Dorsolateral prefrontal cortex (tissue), 120 donors: ENCODE measurements at regions of chrX and their contacts with region 1.

Region 1: DNA sequence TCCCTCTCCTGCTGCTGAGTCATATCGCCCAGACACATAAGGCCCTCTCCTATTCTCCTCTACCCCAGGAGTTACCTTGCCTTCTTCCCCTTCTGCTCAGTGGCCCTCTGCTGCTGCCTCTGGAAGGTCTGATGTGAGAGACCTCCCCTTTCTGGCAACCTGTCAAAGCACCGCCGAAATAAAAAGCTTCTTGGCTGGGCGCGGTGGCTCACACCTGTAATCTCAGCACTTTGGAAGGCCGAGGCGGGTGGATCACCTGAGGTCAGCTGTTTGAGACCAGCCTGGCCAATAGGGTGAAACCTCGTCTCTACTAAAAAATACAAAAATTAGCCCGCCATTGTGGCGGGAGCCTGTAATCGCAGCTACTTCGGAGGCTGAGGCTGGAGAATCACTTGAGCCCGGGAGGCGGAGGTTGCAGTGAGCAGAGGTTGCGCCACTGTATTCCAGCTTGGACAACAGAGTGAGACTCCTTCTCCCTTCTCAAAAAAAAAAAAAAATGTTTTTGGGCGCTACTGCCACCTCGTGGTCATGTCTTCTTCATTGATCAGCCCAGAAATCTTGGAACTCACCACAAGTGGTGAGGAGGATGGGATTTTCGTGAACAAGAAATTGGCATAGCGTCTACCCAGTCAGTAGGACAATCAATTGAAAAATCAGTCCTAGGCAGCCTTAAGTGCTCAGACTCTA is 8.6 kb upstream of the ZXDA start:
- DNase-seq: no peak
- H3K4me3 ChIP-seq: peak overlapping the region in 38 of 59 donors; percentile 6 to 53 (median 31)
- H3K27ac ChIP-seq: no peak overlapping the region
- H3K27me3 ChIP-seq: peaks cover 0 to 73% (median 18%) of the 10 kb centered on the region in 45 donors
- CTCF ChIP-seq: peak in 55 of 56 donors; percentile 40 to 77 (median 60)

Region 2: GRCh38 chrX:57595381-57595811 is 323.5 kb before region 1 on chrX:
- intact Hi-C with region 1: loop called in 1 of 2 experiments (anchors 10 kb)
- DNase-seq: no peak
- H3K4me3 ChIP-seq: peak overlapping the region in 45 of 59 donors; percentile 1 to 52 (median 25)
- H3K27ac ChIP-seq: peak overlapping the region in 5 of 59 donors; percentile 6 to 48 (median 22)
- H3K27me3 ChIP-seq: peaks cover 0 to 36% (median 0%) of the 10 kb centered on the region in 45 donors
- CTCF ChIP-seq: no peak

Region 3: GRCh38 chrX:58025979-58026378 is 107.1 kb after region 1 on chrX:
- intact Hi-C with region 1: no loop called
- DNase-seq: peak in 4 of 10 donors; percentile 6 to 29 (median 17)
- H3K4me3 ChIP-seq: no peak overlapping the region
- H3K27ac ChIP-seq: no peak overlapping the region
- H3K27me3 ChIP-seq: peaks cover 0 to 46% (median 7%) of the 10 kb centered on the region in 45 donors
- CTCF ChIP-seq: peak in 55 of 56 donors; percentile 19 to 77 (median 58)